GM18951 (cell line): ENCODE measurements at regions of chr16 and their contacts with region 1.

Region 1: GRCh38 chr16:68040507-68041288 is 17.6 kb downstream of the DUS2 start:
- POLR2A ChIP-seq: no peak

Region 2: GRCh38 chr16:67667817-67668494 is 372.7 kb before region 1 on chr16:
- in situ Hi-C with region 1: loop called (anchors 25 kb)
- POLR2A ChIP-seq: peak; percentile 30

Region 3: DNA sequence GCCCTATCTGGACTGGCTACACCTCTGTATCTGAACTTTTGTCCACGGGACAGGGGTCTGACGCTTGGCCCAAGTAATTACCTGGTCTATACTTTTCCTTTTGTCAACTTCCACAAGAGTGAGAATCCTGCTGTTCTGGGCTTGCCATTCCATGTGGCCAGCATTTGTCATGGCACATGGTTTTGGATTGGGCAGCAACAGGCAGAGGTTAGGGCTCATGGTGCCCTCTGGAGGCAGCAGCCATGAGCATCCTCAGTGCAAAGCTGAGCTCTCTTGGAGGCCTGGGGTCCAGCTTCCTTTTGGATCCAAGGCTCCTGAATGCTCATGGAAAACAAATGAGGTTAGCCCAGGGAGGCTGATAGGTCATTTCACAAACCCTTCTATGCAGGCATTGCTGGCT is 175.4 kb before region 1 on chr16:
- in situ Hi-C with region 1: no loop called
- POLR2A ChIP-seq: no peak